Thyroid gland (tissue), 4 donors: ENCODE measurements at regions of chr20 and their contacts with region 1.

Region 1: DNA sequence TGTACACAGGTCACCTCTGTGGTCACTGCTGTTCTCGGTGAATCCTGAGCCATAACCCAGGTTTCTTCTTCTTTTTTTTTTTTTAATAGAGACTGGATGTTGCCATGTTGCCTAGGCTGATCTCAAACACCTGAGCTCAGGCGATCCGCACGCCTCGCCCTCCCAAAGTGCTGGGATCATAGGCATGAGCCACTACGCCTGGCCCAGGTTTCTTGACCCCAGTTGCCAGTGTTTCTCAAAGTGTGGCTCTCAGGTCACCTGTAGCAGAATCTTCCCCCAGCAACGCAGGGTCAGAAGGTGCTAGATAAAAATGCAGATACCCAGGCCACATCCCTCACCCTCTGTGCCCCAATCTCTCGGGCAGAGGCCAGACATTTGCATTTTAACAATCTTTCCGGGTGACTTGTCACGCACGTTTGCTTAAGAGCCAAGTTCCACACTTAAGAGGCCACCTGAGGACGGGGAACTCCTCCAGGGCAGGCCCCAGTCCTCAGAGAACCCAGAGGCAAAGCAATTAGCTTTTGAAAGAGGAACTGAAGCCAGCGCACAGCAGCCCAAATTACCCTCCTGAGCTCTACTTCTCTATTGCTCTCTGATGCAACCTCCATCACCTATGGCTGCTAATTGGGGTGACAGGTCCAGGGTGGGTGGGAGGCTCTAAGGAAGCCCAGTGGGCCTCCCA is 81.8 kb downstream of the NFATC2 start:
- DNase-seq: peak; percentile 21 to 27
- H3K4me3 ChIP-seq: no peak overlapping the region
- H3K27ac ChIP-seq: peak overlapping the region in 1 of 3 donors; percentile 16
- H3K4me1 ChIP-seq: peaks cover 20 to 37% of the 10 kb centered on the region in 2 donors
- H3K27me3 ChIP-seq: no peaks in the 10 kb centered on the region
- CTCF ChIP-seq: no peak
- POLR2A ChIP-seq: no peak

Region 2: DNA sequence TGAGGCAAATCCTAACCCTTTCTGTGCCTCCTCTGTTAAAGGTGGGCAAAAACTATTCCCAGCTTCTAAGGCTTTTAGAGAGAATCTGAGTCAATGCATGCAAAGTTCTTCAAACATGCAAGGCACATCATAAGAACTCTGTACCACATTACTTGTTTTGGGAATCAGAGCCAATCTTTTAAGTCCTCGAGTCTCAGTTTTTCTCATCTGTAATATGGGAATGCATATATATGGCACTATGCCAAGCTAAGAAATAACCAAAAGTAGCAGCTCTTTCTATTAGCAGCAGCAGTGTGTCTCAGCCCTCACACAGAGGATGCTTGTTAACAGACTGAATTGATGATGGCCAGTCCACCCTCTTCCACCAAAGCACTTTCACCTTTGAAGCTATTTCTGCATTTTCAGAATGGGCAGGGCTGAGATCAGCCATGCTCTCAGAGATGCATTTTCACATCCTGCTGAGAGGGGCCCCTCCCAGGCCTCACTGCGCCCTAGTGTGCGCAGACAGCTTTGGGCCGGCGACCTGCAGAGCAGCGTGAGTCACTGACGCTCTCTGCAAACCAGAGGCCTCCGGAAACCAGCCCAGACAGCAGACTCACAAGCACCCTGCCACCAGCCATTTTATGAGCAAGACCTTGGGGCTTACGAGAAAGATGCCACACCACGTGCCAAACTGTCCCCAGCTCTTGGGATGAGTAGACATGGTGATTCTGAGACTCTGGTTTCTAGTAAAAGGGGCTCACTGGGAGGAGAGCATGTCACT is 56.2 kb before region 1 on chr20:
- intact Hi-C with region 1: loop called (anchors 10 kb)
- DNase-seq: no peak
- H3K4me3 ChIP-seq: no peak overlapping the region
- H3K27ac ChIP-seq: no peak overlapping the region
- H3K4me1 ChIP-seq: peaks cover 2 to 6% of the 10 kb centered on the region in 2 donors
- H3K27me3 ChIP-seq: no peaks in the 10 kb centered on the region
- CTCF ChIP-seq: no peak
- POLR2A ChIP-seq: no peak

Region 3: GRCh38 chr20:51562332-51563155 is 101.8 kb after region 1 on chr20:
- intact Hi-C with region 1: no loop called
- DNase-seq: peak; percentile 73 to 75
- H3K4me3 ChIP-seq: peak overlapping the region in 2 of 3 donors; percentile 31 to 34
- H3K27ac ChIP-seq: peak overlapping the region; percentile 67 to 82 (median 77)
- H3K4me1 ChIP-seq: peaks cover 12 to 30% of the 10 kb centered on the region in 2 donors
- H3K27me3 ChIP-seq: no peaks in the 10 kb centered on the region
- CTCF ChIP-seq: peak in 4 of 6 experiments; percentile 7 to 44 (median 28)
- POLR2A ChIP-seq: peak in 1 of 2 donors; percentile 10